Esophagus squamous epithelium (tissue), 5 donors: ENCODE measurements at regions of chr22 and their contacts with region 1.

Region 1: DNA sequence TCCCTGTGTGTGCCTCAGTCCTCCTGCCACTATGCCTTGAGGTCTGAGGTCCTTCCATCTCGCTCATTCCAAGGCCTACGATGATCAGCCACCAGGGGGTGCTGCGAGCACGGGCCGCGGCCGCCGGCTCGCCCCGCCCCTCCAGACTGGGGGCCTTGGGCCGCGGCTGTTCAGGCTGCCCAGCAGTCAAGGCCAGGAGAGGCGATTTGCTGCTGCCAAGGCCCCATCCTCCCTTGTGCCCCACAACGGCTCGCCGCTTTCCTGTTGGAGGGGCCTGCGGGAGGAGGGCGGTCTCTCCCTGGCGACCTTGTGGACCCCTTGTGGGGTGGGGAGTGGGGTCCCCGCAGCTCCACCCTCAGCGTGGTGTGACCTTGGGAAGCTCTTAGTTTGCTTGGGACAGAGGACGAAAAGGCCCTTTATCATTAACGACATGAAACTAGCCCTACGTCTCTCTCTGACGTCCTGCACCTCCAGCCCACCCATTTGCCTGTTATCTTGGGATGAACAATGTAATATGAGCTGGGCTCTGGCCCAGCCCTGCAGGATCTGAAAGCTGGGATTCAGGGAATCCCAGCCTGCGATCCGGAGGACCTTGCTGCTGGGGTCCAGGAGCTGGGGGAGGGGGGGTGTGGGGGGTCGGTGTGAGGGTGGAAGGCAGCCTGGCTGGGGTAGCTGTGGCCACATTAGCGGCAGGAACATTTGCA is 5.3 kb upstream of the GALR3 start:
- DNase-seq: no peak
- H3K4me3 ChIP-seq: peak overlapping the region in 3 of 4 donors; percentile 35 to 67 (median 42)
- H3K27ac ChIP-seq: peak overlapping the region in 2 of 4 donors; percentile 42 to 45
- H3K4me1 ChIP-seq: peaks cover 15 to 25% (median 18%) of the 10 kb centered on the region in 3 donors
- H3K27me3 ChIP-seq: peaks cover 0 to 40% (median 0%) of the 10 kb centered on the region in 4 donors
- CTCF ChIP-seq: peak; percentile 90 to 97 (median 95)
- POLR2A ChIP-seq: no peak

Region 2: GRCh38 chr22:37862570-37863325 is 44.9 kb after region 1 on chr22:
- intact Hi-C with region 1: loop called (anchors 5 kb)
- DNase-seq: no peak
- H3K4me3 ChIP-seq: no peak overlapping the region
- H3K27ac ChIP-seq: no peak overlapping the region
- H3K4me1 ChIP-seq: peaks cover 0 to 8% (median 2%) of the 10 kb centered on the region in 3 donors
- H3K27me3 ChIP-seq: no peaks in the 10 kb centered on the region
- CTCF ChIP-seq: no peak
- POLR2A ChIP-seq: no peak

Region 3: DNA sequence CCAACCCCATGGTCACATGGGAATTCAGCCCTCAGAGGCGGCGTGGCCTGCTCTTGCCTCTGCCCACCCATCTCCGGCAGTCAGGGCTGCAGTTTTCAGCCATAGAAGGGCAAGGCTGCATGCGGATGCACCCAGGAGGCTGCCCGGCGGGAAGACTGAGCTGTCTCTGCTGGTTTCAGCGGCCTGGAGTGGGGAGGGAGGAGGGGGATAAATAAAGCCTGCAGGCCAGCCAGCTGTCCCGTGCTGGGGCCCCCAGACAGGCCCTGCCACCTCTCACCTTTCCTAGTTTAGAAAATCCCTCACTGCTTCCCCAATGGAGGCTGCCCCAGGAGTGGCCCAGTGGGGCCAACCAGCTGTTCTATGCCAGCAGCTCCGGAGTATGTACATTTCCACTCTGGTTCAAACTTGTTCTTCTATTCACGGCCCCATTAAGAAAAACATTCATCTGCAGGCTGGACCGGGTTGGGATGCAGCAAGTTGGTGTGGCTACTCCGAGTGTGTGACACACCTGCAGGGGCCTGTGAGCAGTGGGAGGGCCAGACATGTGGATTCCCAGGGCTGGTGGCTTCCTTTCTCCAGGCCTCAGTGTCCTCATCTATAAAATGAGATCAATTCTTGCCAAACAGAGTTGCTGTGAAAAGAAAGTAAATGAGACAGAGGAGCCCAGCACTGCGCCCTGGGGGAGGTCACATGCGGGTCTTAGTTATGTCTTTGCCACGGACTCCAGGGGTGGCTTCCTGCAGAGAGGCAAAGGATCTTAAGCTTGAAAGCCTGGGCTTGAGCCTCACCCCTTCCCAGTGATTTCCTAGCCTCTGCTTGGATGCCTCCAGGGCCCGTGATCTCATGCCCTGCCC is 93.3 kb after region 1 on chr22:
- intact Hi-C with region 1: no loop called
- DNase-seq: no peak
- H3K4me3 ChIP-seq: peak overlapping the region in 2 of 4 donors; percentile 6 to 39
- H3K27ac ChIP-seq: peak overlapping the region; percentile 69 to 99 (median 84)
- H3K4me1 ChIP-seq: peaks cover 20 to 73% (median 35%) of the 10 kb centered on the region in 3 donors
- H3K27me3 ChIP-seq: no peaks in the 10 kb centered on the region
- CTCF ChIP-seq: no peak
- POLR2A ChIP-seq: no peak

Region 4: GRCh38 chr22:37982938-37983859 is 165.3 kb after region 1 on chr22:
- intact Hi-C with region 1: no loop called
- DNase-seq: no peak
- H3K4me3 ChIP-seq: peak overlapping the region in 3 of 4 donors; percentile 7 to 45 (median 23)
- H3K27ac ChIP-seq: peak overlapping the region in 1 of 4 donors; percentile 19
- H3K4me1 ChIP-seq: no peaks in the 10 kb centered on the region
- H3K27me3 ChIP-seq: no peaks in the 10 kb centered on the region
- CTCF ChIP-seq: no peak
- POLR2A ChIP-seq: no peak